Activated CD4-positive, alpha-beta memory T cell treated with anti-CD3 and anti-CD28 coated beads for 36 hours (primary cell): ENCODE measurements at regions of chr11 and their contacts with region 1.

Region 1: GRCh38 chr11:128226106-128226716 is 361.1 kb downstream of the ETS1 start:
- DNase-seq: peak; percentile 66
- H3K4me3 Mint-ChIP-seq: no peak overlapping the region
- H3K27ac Mint-ChIP-seq: peak overlapping the region; percentile 9
- H3K4me1 Mint-ChIP-seq: peaks cover 46% of the 10 kb centered on the region
- H3K27me3 Mint-ChIP-seq: no peaks in the 10 kb centered on the region

Region 2: DNA sequence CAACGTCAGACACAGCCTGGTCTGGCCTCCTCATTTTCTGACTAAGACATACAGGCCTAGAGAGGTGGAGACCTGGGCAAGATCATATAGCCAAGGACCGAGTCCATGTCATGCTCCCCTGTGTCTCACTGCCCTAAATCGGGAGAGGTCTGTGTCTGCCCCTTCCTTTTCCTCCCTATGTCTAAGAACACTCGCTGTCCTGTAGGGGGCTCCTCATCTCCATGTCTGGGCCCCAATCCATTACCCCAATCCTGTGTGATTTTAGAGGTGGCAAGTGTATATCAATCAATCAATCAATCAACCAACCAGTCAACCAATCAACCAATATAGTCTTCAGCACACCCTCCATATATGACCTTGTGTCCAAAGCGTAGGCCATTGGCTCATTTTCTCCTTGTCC is 1351.4 kb before region 1 on chr11:
- CTCF ChIA-PET with region 1: no interaction called
- POLR2A ChIA-PET with region 1: no interaction called
- intact Hi-C with region 1: no loop called
- DNase-seq: no peak
- H3K4me3 Mint-ChIP-seq: no peak overlapping the region
- H3K27ac Mint-ChIP-seq: no peak overlapping the region
- H3K4me1 Mint-ChIP-seq: no peaks in the 10 kb centered on the region
- H3K27me3 Mint-ChIP-seq: peaks cover 2% of the 10 kb centered on the region

Region 3: DNA sequence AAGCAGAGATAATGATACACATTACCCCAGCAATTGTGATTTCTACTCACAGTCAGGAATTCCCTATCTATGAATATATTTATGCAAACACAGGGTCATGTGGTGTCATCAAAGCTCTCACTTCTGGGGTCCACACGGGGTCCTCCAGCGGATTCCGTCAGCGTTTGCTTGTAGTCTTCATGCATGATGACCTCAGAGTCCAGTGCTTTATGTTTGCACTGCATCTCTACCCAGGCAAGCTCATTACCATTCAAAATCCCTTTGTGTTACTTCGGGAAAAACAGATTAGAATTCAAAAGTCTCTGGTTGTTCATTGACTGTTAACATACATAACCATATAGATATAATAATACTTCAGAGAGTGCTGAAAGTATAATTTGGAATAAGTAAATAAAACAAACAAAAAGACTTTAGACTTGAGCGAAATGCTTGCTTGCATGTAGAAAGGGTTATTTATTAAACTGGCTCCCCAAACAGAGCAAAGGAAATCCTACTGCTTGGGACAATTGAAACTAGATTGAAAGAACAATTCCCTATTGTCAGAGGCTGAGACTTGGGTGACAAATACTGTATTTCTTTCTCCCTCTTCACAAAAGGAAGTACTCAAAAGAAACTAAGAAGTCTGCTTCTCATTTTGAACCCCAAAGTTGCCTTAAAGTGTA is 62.0 kb before region 1 on chr11:
- CTCF ChIA-PET with region 1: no interaction called
- POLR2A ChIA-PET with region 1: no interaction called
- intact Hi-C with region 1: no loop called
- DNase-seq: no peak
- H3K4me3 Mint-ChIP-seq: no peak overlapping the region
- H3K27ac Mint-ChIP-seq: no peak overlapping the region
- H3K4me1 Mint-ChIP-seq: peaks cover 4% of the 10 kb centered on the region
- H3K27me3 Mint-ChIP-seq: no peaks in the 10 kb centered on the region

Region 4: DNA sequence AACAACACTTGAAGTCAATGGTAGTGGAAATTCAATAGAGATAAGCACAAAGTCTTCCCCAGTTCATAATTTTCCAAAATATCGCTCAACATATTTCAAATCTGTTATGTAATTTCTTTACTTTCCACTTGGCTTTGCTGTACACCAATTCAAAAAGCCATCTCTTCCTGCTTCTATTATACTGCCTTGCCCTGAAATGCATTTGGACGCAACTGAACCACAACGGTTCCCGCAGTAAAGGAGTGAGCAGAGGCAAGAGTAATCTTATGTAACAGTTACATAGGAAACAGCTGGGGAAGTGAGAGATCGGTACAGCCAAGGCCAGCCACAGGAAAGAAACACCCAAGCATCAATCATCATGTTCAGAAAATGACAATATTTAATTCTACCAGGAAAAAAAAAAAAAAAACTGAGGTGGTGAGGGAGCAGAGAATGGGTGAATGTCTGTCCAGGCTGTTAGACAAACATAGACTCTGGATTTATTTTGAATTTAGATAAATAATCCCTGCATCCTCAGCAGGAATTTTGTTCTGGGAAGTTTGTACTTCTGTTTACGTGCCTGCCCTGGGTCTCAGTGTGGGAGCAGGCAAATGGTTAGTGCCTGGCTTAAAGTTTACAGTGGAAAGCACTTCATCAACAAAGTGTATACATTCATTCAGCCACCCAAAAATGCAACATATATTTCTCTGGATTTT is 31.0 kb before region 1 on chr11:
- CTCF ChIA-PET with region 1: interaction called, 3 read pairs
- POLR2A ChIA-PET with region 1: interaction called, 4 read pairs
- intact Hi-C with region 1: loop called (anchors 1 kb)
- DNase-seq: peak; percentile 69
- H3K4me3 Mint-ChIP-seq: no peak overlapping the region
- H3K27ac Mint-ChIP-seq: peak overlapping the region; percentile 2
- H3K4me1 Mint-ChIP-seq: peaks cover 38% of the 10 kb centered on the region
- H3K27me3 Mint-ChIP-seq: no peaks in the 10 kb centered on the region

Region 5: DNA sequence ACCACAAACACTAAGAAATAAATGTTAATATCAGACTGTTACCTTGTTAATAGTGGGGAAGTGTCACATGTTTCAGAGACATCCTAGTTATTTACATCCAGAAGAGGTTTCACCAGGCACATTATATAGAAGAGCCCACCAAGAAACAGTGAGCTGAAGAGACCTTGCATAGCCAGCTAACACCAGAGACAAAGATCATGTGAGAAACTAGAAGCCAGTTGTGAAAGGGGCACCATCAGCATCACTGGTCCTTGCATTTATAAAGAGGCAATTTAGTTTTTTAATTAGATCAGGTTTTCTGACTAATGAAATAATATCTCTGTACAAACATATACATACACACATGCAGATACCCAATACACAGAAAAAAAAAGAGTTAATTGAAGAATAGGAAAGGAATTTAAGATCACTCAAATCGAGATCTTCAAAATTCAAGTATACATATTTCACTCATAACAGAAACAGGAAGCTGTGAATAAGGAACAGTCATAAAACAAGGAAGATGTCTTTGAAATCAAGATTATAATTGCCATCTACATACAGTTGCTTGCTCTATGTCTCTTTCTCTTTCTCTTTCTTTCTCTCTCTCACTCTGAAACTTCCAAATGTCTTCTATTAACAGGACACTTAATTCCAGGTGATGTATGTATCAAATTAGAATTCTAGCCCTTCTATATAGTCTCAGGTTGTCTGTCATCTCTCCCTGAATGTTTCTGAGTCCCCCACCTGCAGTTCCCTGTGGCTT is 12.5 kb after region 1 on chr11:
- CTCF ChIA-PET with region 1: interaction called, 3 read pairs
- POLR2A ChIA-PET with region 1: interaction called, 5 read pairs
- intact Hi-C with region 1: loop called (anchors 1 kb)
- DNase-seq: no peak
- H3K4me3 Mint-ChIP-seq: peak overlapping the region; percentile 45
- H3K27ac Mint-ChIP-seq: peak overlapping the region; percentile 75
- H3K4me1 Mint-ChIP-seq: peaks cover 27% of the 10 kb centered on the region
- H3K27me3 Mint-ChIP-seq: no peaks in the 10 kb centered on the region

Region 6: DNA sequence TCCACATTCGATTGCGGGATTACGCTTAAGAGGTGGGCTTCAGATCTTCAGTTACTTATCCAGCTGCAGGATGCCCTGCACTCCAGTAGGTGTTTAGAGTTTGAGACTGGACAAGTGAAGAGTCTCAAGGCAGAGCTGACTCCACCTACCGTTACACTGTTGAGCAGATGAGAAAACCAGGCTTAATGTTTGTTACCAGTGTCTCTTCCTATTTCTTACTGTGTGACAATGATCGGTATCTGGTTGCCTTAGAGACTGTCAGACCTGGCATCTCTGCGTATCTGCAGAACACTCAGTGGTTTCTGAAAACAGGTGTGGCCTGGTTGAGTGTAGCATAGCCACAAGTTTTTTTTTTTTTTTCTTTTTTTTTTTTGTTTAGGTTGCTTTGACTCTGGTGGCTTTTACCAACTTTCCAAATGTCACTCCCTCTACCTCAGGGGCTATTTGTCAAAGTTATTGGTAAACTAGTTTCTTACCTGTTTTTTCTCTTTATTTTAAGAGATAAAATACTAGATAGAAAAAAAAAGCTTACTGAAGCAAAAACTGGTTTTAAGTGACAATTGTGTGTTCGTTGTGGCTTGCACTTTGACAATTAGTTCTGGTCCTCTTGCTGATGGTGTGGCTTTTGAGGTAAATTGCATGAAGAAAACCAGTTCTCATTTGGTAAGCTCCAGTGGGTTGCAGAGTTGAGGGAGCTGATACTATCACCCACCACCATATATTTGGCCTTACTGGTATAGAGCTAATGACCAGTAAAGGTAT is 76.4 kb after region 1 on chr11:
- CTCF ChIA-PET with region 1: no interaction called
- POLR2A ChIA-PET with region 1: no interaction called
- intact Hi-C with region 1: no loop called
- DNase-seq: peak; percentile 81
- H3K4me3 Mint-ChIP-seq: peak overlapping the region; percentile 79
- H3K27ac Mint-ChIP-seq: peak overlapping the region; percentile 94
- H3K4me1 Mint-ChIP-seq: peaks cover 78% of the 10 kb centered on the region
- H3K27me3 Mint-ChIP-seq: no peaks in the 10 kb centered on the region

Region 7: GRCh38 chr11:128328955-128329551 is 102.8 kb after region 1 on chr11:
- CTCF ChIA-PET with region 1: no interaction called
- POLR2A ChIA-PET with region 1: interaction called, 3 read pairs
- intact Hi-C with region 1: loop called (anchors 5 kb)
- DNase-seq: peak; percentile 76
- H3K4me3 Mint-ChIP-seq: peak overlapping the region; percentile 21
- H3K27ac Mint-ChIP-seq: peak overlapping the region; percentile 94
- H3K4me1 Mint-ChIP-seq: peaks cover 76% of the 10 kb centered on the region
- H3K27me3 Mint-ChIP-seq: no peaks in the 10 kb centered on the region